Dorsolateral prefrontal cortex (tissue), 120 donors: ENCODE measurements at regions of chr10 and their contacts with region 1.

Region 1: DNA sequence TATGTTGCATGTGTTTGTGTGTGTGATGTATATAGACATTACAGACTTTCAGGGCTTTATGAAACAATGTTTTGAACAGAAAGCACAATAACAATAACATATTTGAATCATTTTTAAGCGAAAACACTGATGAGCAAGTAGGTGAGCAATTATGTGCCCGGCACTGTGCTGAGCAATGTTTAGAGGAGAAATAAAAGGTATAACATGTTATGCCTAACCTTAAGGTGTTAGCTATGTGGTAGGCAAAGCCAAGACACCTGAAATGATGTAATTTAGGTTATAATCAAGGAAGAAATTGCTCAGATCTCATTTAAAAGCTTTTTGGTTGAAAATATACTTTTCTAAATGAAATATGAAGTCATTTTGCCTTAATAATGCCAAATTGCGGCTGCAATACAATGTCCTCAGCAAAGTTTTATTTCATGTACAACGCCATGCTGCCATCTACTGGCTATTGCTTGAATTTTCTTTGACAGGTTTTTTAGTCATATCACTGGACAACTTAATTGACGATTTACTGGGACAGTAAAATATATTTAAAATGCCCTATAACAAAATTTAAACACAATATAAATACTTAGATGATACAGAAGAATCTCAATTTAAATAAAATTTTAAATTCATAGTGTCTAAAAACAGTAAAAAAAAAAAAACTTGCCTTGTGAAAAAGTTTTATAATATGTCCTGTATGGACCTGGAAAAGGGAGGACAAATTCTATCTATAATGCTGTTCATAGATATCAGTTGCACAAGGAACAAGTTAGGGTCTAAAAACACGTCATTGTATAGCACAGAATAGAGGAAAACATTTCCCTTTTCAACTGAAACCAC is 131.1 kb upstream of the CDK1 start:
- DNase-seq: peak in 2 of 10 donors; percentile 19 to 40
- H3K4me3 ChIP-seq: peak overlapping the region in 2 of 59 donors; percentile 15 to 26
- H3K27ac ChIP-seq: peak overlapping the region in 1 of 59 donors; percentile 21
- H3K27me3 ChIP-seq: peaks cover 0 to 2% (median 0%) of the 10 kb centered on the region in 45 donors
- CTCF ChIP-seq: peak; percentile 75 to 98 (median 87)

Region 2: GRCh38 chr10:60099998-60100747 is 547.0 kb before region 1 on chr10:
- intact Hi-C with region 1: loop called in 1 of 2 experiments (anchors 10 kb)
- DNase-seq: peak in 1 of 10 donors; percentile 33
- H3K4me3 ChIP-seq: no peak overlapping the region
- H3K27ac ChIP-seq: peak overlapping the region in 25 of 59 donors; percentile 0 to 78 (median 29)
- H3K27me3 ChIP-seq: no peaks in the 10 kb centered on the region
- CTCF ChIP-seq: peak; percentile 57 to 92 (median 76)

Region 3: DNA sequence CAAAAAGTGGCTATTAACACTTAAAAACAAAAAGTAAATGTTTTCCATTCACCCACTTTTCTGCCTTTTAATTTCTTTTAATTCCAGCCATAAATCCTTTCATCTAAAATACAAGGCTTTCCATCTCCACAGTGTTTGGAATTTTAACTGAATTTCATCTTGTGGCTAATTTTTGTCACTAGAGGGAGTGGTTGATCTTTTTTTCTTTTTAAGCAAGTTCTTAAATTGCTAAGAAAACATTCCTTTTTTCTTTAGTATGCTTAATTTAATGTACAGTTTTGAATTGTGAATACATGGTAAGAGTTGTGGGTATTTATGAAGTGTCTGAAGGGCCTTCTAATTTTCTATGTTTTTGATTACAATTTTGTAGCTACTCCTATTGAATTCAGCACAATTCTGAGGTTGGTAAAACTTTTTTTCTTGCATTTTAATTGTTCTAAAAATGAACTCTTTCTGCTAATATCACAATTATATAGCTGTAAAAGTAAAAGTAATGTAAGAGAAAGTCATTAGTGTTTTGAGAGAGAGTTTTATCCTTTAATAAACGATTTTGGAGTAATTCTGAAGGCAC is 202.6 kb before region 1 on chr10:
- intact Hi-C with region 1: loop called (anchors 2 kb)
- DNase-seq: no peak
- H3K4me3 ChIP-seq: no peak overlapping the region
- H3K27ac ChIP-seq: peak overlapping the region in 29 of 59 donors; percentile 1 to 85 (median 68)
- H3K27me3 ChIP-seq: no peaks in the 10 kb centered on the region
- CTCF ChIP-seq: peak; percentile 45 to 98 (median 76)

Region 4: DNA sequence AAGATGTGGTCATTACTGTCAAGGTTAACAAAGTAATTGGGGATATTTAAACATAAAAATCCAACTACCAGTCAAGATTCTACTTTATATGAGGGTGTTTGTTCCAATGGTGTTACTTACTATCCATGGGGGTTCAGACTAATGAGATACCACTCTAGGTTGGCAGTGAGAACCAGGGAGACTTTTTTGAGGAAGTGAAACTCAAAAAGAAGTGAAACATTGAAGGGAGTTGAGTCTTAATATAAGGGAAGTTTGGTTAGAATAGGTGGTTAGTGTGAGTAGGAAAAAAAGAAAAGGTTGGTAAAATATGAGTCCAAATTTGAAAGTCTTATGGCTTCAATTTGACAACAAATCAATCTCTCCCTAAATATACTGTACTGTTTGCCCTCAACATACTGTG is 133.9 kb before region 1 on chr10:
- intact Hi-C with region 1: no loop called
- DNase-seq: no peak
- H3K4me3 ChIP-seq: no peak overlapping the region
- H3K27ac ChIP-seq: peak overlapping the region in 11 of 59 donors; percentile 0 to 94 (median 49)
- H3K27me3 ChIP-seq: no peaks in the 10 kb centered on the region
- CTCF ChIP-seq: no peak